Gastrocnemius medialis (tissue), 4 donors: ENCODE measurements at regions of chr17 and their contacts with region 1.

Region 1: DNA sequence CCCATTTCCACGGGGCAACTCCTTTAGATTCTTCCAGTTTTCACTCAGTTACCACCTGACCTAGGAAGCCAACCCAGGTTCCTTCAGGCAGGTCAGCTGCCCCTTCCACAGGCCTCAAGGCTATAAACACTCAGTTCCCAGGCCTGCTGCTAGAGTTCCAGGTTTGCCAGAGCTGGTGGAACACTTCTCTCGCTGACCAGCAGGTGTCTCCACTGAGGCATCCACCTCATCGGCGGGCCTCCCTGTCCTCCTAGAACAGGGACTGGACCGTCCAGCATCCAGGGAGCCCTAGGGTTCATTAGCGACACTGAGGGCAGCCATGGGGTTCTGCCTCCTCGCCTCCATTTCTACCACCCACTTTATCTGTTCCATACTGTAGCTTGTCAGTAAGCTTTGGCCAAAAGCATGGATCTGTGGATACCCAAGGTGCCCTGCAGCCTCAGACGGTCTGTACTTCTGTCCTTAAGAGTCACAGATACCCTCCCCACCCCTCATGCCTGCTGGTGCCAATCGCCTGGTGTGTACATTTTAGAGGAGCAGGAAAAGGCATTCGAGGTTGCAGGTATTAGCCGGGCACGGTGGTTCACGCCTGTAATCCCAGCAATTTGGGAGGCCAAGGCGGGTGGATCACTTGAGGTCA is 29.0 kb downstream of the PIMREG start:
- DNase-seq: peak; percentile 33 to 36
- ATAC-seq: peak; percentile 81 to 82
- H3K4me3 ChIP-seq: no peak overlapping the region
- H3K27ac ChIP-seq: no peak overlapping the region
- H3K4me1 ChIP-seq: peaks cover 4 to 6% of the 10 kb centered on the region in 2 donors
- H3K27me3 ChIP-seq: no peaks in the 10 kb centered on the region
- CTCF ChIP-seq: peak; percentile 55 to 93 (median 80)
- POLR2A ChIP-seq: no peak

Region 2: DNA sequence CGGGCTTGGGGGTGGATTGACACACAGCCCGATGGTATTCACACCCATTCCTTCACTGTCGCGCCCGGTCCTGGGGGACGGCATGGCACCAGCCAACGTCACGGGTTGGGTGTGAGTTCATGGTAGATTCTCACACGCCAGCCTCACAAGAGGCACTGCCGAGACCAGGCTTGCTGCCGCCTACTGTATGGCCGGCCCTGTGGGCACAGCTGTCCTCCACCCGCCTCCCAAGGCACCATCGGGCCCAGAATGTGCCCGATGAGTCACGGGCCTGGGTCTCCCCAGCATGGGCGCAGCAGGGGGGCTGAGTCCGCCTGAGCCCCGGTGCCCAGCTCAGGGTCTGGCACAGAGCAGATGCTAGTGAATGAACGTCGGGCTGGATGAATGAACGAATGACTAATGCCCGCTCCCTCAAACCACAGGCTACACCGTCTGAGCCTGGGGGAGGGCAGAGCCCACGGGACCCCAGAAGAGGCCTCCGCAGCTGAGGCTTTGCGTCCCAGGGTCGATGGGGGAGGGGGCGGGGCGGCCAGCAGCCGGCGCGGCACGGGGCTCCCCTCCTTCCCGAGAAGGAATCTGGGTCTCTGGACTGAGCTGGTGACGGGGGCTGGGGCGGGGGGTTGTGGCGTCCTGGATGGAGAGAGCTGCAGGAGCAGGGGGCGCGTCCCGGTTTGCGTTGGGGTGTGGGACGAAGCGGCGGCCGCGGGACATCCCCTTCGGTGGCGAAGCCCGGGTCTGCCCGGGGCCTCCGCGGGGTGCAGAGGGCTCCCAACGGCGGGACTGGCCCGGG is 82.3 kb after region 1 on chr17:
- in situ Hi-C with region 1: no loop called
- intact Hi-C with region 1: loop called (anchors 10 kb)
- DNase-seq: no peak
- ATAC-seq: peak in 1 of 2 donors; percentile 45
- H3K4me3 ChIP-seq: peak overlapping the region; percentile 36 to 52 (median 46)
- H3K27ac ChIP-seq: no peak overlapping the region
- H3K4me1 ChIP-seq: peaks cover 6 to 7% of the 10 kb centered on the region in 2 donors
- H3K27me3 ChIP-seq: peaks cover 29 to 41% (median 31%) of the 10 kb centered on the region in 3 donors
- CTCF ChIP-seq: no peak
- POLR2A ChIP-seq: no peak

Region 3: DNA sequence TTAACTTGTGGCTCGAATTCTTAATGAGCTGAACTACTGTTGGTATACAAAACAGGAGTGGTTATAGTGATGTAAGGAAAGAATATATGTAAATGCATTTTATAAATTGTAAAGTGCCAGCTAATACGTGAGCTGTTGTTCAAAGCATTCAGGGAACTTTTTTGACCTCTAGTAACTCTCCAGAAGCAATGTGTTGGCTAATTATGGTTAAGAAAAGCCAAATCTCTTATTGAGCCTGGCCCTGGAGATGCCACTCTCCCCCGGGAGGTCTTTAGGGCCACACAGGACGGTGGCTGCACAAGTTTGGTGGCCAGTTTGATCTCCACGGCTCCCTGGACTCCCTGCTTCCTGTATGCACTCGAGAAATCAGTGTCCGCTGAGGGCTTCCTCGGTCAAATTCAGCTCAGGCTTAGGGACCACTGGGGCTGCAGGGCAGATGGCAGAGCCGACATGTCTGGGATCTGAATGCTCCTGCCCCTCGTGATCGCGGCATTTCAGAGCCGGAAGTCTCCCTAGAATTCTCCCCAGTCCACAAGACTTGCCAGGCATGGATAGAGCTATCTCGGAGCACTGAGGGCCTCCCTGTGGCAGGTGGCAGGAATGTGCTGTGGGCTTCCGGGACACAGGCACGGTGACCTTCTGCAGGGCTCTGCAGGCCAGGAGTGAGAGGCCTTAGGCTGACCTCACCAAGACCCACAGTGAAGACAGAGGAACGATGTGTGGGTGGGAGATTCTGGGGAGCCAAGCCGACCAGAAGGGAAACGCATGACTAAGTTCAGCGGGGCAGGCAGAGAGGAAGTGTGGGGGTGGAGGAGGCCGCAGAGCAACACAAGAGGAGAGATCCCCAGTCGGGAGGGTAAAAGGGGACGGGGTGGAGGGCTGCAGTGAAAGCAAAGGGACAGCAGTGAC is 101.7 kb after region 1 on chr17:
- in situ Hi-C with region 1: loop called in 1 of 4 experiments (anchors 25 kb)
- intact Hi-C with region 1: no loop called
- DNase-seq: no peak
- ATAC-seq: no peak
- H3K4me3 ChIP-seq: no peak overlapping the region
- H3K27ac ChIP-seq: no peak overlapping the region
- H3K4me1 ChIP-seq: peaks cover 0 to 4% of the 10 kb centered on the region in 2 donors
- H3K27me3 ChIP-seq: peaks cover 0 to under 1% (median 0%) of the 10 kb centered on the region in 3 donors
- CTCF ChIP-seq: no peak
- POLR2A ChIP-seq: no peak

Region 4: GRCh38 chr17:6640536-6641373 is 167.5 kb after region 1 on chr17 and contains the starts of genes KIAA0753 and TXNDC17:
- in situ Hi-C with region 1: no loop called
- intact Hi-C with region 1: loop called (anchors 2 kb)
- DNase-seq: peak; percentile 84 to 86
- ATAC-seq: peak; percentile 96
- H3K4me3 ChIP-seq: peak within 1 kb of the TSS; percentile 91 to 97 (median 93)
- H3K27ac ChIP-seq: peak within 1 kb of the TSS; percentile 72 to 90 (median 82)
- H3K4me1 ChIP-seq: peaks cover 10 to 22% of the 10 kb centered on the region in 2 donors
- H3K27me3 ChIP-seq: no peaks in the 10 kb centered on the region
- CTCF ChIP-seq: peak in 1 of 5 experiments; percentile 14
- POLR2A ChIP-seq: peak; percentile 66 to 69
- total RNA-seq, gene KIAA0753: 3.0 to 6.3 (median 3.6) TPM
- total RNA-seq, gene TXNDC17: 85.5 to 183 (median 106) TPM